Lower lobe of right lung (tissue), 2 donors: ENCODE measurements at regions of chr1 and their contacts with region 1.

Region 1: DNA sequence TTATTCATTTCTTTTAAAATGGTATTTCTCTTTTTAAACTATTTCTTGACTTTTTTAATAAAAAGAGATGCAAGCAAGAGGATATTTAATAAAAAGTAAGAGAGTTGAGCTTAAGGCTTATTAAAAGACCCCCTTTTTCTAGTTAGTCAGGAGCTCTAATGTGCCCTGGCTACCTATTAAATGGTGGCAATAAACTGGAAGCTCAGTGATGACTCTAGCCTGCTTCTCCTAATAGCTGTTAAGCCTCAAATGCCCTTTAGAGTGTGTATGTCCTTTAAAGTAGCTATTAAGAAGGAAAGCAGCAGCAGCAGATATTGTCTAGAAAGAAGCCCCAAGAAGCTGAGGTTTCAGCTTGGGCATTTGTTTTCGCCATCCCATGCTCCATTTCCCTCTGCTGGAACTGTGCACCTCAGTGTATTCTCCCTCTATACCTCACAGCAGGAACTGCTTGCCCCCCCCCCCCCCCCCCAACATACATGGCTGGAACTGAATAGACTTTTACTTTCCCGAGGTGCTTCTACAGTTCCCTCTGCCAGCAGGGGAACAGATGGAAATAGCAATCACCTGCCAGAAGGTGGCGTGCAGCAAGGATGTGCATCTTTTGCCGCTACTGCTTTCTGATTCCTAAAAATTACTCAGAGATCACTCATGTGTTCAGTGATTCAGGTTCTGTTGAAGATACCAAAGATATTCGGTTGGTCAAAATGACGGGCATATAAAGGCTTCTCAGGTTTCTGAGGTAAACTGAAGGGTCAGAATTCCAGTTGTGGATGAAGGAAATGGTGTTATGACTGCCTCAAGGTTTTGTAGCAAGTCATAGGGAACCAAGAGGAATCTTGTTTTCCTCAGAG is 2.5 kb downstream of the RGS4 start:
- DNase-seq: no peak
- ATAC-seq: peak in 1 of 2 donors; percentile 68
- H3K4me3 ChIP-seq: no peak overlapping the region
- H3K27ac ChIP-seq: no peak overlapping the region
- H3K4me1 ChIP-seq: no peaks in the 10 kb centered on the region
- H3K27me3 ChIP-seq: no peaks in the 10 kb centered on the region
- CTCF ChIP-seq: peak; percentile 62

Region 2: GRCh38 chr1:163174524-163175437 is 103.2 kb after region 1 on chr1:
- intact Hi-C with region 1: loop called (anchors 5 kb)
- DNase-seq: peak; percentile 58
- ATAC-seq: peak in 1 of 2 donors; percentile 60
- H3K4me3 ChIP-seq: no peak overlapping the region
- H3K27ac ChIP-seq: no peak overlapping the region
- H3K4me1 ChIP-seq: peaks cover 19% of the 10 kb centered on the region
- H3K27me3 ChIP-seq: no peaks in the 10 kb centered on the region
- CTCF ChIP-seq: peak; percentile 86